Activated CD8-positive, alpha-beta T cell treated with anti-CD3 and anti-CD28 coated beads, Interleukin-2, amount 10 ng/mL, durations not matched to agents 7 days and 5 days (primary cell): ENCODE measurements at regions of chr16 and their contacts with region 1.

Region 1: GRCh38 chr16:57416122-57416509 is 11.5 kb downstream of the CCL17 start:
- DNase-seq: no peak
- ATAC-seq: no peak
- H3K4me3 Mint-ChIP-seq: no peak overlapping the region
- H3K27ac Mint-ChIP-seq: no peak overlapping the region
- H3K4me1 Mint-ChIP-seq: peaks cover 25% of the 10 kb centered on the region
- H3K27me3 Mint-ChIP-seq: no peaks in the 10 kb centered on the region

Region 2: DNA sequence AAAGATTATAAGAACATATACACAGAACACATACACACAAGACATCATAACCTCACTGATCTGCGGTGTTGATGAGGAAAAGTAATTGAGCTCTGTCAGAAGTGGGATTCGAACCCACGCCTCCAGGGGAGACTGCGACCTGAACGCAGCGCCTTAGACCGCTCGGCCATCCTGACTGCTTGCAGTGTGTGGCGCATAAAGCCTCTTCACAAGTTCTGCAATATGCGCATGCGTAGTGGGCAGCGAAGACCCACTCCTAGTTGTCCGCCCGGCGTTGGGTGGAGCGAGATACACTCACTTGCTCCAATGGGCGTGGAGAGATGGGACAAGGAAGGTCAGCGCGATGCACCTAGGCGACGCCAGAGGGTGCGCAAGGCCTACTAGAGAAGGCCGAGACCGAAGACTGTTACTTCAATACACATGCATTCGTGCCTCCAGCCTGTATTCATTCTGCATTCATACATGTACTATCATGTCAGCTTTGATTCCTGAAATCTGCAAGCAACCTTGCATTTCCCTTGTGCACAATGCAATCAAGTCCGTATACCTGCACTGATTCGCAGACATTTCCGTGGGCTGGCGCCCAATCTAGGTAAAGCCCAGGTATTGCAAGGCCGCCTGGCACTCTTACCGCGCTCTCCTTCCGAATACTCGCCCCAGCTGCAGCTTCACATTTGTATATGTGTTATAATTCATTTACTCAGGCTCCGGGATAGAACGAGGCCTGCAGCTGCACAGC is 115.6 kb before region 1 on chr16:
- CTCF ChIA-PET with region 1: interaction called, 338 read pairs
- POLR2A ChIA-PET with region 1: interaction called, 20 read pairs
- DNase-seq: peak; percentile 99
- ATAC-seq: peak; percentile 91
- H3K4me3 Mint-ChIP-seq: no peak overlapping the region
- H3K27ac Mint-ChIP-seq: no peak overlapping the region
- H3K4me1 Mint-ChIP-seq: peaks cover 41% of the 10 kb centered on the region
- H3K27me3 Mint-ChIP-seq: peaks cover 5% of the 10 kb centered on the region

Region 3: DNA sequence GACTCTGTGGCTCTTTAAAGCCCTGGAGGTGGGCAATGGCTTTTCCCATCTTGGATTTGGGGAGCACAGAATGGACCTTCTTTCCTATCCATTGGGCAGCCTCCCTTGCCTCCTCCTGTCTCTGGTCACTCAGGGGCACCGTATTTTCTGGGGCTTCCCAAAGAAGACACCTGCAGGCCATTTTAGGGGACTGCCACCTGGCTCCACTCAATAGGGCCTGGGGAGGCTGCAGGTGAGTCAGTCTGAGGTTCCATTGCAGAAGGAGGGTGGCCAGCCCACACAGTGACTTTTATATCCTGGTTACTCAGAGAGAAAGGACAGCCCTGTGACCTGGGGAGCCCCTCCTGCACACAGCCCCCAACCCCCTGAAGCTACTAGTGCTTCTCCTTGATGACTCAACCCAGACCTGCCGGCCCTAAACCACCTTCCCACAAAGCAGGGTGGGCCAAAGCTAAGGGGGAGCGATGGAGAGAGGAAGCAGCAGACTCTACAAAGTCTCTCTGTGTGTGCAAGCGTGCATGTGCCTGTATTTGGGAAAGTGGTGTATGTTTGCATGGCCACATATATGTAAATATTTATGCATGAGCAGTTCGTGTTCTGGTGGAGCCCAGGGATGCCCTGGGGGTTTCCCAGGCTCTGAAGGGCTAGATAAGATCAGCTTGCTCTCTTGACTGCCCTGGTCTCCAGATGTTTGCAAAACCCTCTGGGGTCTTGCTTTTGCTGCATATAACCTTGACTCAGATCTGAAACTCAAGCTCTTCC is 38.9 kb before region 1 on chr16:
- CTCF ChIA-PET with region 1: interaction called, 10 read pairs
- POLR2A ChIA-PET with region 1: no interaction called
- DNase-seq: peak; percentile 37
- ATAC-seq: peak; percentile 37
- H3K4me3 Mint-ChIP-seq: no peak overlapping the region
- H3K27ac Mint-ChIP-seq: no peak overlapping the region
- H3K4me1 Mint-ChIP-seq: peaks cover 20% of the 10 kb centered on the region
- H3K27me3 Mint-ChIP-seq: no peaks in the 10 kb centered on the region

Region 4: DNA sequence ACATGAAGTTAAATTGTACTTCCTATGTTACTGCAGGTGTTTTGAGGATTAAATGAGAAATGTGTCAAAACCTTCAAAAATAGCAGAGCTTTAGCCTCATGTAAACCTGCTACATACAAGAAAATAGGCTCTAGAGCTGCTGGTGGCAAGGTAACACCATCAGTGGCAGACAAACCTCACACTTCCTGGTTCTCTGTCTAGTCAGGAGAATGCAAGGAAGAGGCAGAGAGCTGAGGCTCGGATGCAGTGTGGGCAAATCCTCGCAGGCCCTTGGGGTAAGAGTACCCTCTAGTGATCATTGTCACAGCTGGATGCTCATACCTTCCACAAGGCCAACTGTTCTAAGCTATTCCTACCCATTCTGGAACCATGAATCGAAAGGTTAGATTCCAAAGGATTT is 16.9 kb after region 1 on chr16:
- CTCF ChIA-PET with region 1: interaction called, 17 read pairs
- POLR2A ChIA-PET with region 1: no interaction called
- DNase-seq: no peak
- ATAC-seq: no peak
- H3K4me3 Mint-ChIP-seq: no peak overlapping the region
- H3K27ac Mint-ChIP-seq: peak overlapping the region; percentile 18
- H3K4me1 Mint-ChIP-seq: peaks cover 12% of the 10 kb centered on the region
- H3K27me3 Mint-ChIP-seq: no peaks in the 10 kb centered on the region

Region 5: DNA sequence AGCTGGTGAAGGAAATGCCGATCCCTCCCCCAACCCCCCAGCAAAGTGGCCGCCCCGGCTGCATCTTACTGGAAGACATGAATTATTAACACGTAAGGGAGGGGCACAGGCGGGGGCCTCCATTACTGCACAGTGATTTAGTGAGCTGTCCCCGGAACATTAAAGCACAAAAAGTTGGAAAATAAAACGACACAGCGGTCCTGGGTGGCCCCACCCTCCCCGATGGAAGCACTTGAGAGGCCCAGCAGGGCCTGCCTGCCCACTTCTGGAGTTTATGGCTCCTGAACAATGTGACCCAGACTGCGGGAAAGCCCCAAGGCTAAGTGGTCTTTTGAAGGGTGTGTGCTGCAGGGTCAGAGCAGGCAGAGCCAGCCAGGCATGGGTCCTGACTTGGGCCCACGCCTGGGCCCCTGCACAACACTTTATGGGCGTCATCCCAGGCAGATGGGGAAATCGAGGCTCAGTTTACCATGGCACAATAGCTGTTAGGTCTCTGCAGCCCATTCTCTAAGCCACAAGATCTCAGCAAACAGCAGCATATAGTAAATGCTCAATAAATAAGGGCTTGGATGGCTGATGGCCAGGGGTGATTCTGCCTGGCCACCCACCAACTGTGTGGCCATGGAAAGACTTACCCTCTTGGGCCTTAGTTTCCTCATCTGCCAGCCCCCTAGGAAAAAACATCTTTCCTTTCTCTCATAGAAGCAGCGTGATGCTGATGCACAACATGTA is 97.4 kb after region 1 on chr16:
- CTCF ChIA-PET with region 1: interaction called, 156 read pairs
- POLR2A ChIA-PET with region 1: no interaction called
- DNase-seq: no peak
- ATAC-seq: no peak
- H3K4me3 Mint-ChIP-seq: no peak overlapping the region
- H3K27ac Mint-ChIP-seq: no peak overlapping the region
- H3K4me1 Mint-ChIP-seq: no peaks in the 10 kb centered on the region
- H3K27me3 Mint-ChIP-seq: no peaks in the 10 kb centered on the region

Region 6: DNA sequence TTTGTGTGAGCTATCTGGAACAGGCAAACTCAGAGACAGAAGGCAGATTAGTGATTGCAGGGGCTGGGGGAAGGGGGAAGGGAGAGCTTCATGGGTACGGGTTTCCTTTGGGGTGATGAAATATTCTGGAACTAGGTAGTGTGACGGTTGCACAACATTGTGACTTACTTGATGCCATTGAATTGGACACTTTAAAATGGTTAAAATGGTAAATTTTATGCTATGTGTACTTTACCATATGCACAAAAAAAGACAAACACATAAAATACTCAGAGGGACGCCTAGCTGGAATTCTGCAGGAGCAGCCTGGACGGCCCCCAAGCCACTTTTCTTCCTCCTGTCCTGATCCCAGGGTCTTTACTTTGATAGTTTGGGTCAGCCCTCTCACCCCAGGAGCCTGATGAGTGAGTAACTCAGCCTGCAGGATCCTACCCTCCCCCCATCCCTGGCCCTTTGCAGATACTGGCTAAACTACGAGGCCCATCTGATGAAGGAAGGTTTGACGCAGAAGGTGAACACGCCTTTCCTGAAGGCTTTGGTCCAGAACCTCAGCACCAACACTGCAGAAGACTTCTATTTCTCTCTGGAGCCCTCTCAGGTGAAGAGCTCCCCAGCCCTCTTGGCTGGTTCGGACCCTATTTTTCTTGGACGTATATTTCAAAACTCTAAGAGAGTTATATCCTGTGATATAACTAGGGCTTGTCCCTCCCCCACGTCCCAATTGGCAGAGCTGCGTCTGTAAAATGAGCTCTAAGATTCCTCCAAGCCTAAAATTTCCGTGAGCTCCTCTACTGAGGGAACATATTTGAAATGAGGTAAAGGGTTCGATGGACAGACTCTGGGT is 259.8 kb after region 1 on chr16:
- CTCF ChIA-PET with region 1: no interaction called
- POLR2A ChIA-PET with region 1: no interaction called
- DNase-seq: no peak
- ATAC-seq: no peak
- H3K4me3 Mint-ChIP-seq: no peak overlapping the region
- H3K27ac Mint-ChIP-seq: no peak overlapping the region
- H3K4me1 Mint-ChIP-seq: peaks cover 10% of the 10 kb centered on the region
- H3K27me3 Mint-ChIP-seq: peaks cover 19% of the 10 kb centered on the region